Activated naive CD4-positive, alpha-beta T cell treated with anti-CD3 and anti-CD28 coated beads for 36 hours (primary cell): ENCODE measurements at regions of chr19 and their contacts with region 1.

Region 1: DNA sequence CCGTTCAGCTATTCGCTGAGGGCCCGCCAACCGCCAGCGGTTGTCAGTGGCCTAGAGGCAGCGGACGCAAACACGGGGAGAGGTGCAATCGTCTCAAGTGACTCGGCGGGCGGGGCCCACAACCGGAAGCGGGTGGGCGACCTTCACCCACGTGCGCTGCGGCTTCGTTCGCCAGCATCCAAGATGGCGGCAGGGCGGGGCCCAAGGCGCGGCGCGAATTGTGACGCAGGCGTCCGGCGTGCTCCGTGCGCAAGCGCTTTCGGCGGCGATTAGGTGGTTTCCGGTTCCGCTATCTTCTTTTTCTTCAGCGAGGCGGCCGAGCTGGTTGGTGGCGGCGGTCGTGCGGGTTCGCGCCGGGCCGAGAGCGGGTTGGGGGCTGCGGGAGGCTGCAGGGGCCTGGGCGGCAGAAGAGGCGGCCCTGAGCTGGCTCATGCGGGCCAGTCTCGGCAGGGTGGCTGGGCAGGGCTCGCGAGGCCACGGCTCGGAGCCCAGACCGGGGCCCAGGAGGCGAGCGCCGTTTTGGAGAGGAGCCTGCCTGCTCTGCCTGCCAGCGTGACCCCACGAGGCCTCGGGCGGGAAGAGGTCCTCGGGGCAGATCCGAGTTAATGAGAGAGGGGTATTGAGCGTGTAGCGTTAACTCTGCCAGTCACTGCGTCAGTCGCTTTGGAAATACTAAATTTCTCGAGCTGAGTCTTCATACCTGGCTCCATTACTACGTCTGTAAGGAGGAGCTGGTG is at the start of gene UBA52:
- DNase-seq: peak; percentile 99
- H3K4me3 Mint-ChIP-seq: peak within 1 kb of the TSS; percentile 90
- H3K27ac Mint-ChIP-seq: peak within 1 kb of the TSS; percentile 93
- H3K4me1 Mint-ChIP-seq: peaks cover 30% of the 10 kb centered on the region
- H3K27me3 Mint-ChIP-seq: no peaks in the 10 kb centered on the region
- total RNA-seq, gene UBA52: 1,997 to 2,122 TPM

Region 2: GRCh38 chr19:18478569-18479311 is 93.0 kb before region 1 on chr19:
- CTCF ChIA-PET with region 1: no interaction called
- intact Hi-C with region 1: loop called (anchors 5 kb)
- DNase-seq: peak; percentile 93
- H3K4me3 Mint-ChIP-seq: peak overlapping the region; percentile 38
- H3K27ac Mint-ChIP-seq: peak overlapping the region; percentile 87
- H3K4me1 Mint-ChIP-seq: peaks cover 65% of the 10 kb centered on the region
- H3K27me3 Mint-ChIP-seq: no peaks in the 10 kb centered on the region

Region 3: DNA sequence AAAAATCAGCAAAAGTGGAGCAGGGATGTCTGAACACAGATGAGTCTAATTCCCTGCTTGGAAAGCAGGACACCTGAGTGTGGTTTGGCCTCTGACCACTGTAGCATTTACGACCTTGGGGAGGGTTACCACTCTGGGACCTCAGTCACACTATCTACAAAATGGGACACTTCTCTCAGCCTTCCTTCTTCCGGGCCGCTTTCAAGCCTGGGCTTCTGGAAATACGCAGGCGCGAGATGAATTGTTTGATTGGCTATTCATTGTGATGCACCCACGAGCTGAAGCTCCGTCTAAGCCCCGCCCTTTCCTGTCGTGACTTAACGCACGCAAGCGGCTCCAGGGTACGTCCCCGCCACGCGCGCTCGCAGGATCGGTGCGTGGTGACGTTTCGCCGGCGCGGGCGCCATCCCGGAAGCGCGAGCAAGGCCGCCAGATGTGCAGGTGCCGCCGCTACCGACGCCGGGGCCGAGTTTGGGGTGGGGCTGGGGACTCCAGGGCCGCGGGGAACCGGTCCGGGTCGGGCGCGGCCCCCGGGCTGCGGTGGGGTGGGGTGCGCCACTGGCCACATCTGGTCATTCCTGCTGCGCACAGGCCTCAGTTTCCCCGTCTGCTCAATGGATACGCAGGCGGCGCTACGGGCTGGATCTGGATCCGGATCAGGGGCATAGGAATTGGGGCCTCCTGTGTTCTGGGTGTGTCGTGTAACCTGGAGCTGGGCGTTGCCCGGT is 14.1 kb before region 1 on chr19 and contains the start of gene KXD1:
- CTCF ChIA-PET with region 1: no interaction called
- intact Hi-C with region 1: loop called (anchors 1 kb)
- DNase-seq: peak; percentile 99
- H3K4me3 Mint-ChIP-seq: peak within 1 kb of the TSS; percentile 93
- H3K27ac Mint-ChIP-seq: peak within 1 kb of the TSS; percentile 92
- H3K4me1 Mint-ChIP-seq: peaks cover 24% of the 10 kb centered on the region
- H3K27me3 Mint-ChIP-seq: no peaks in the 10 kb centered on the region
- total RNA-seq, gene KXD1: 86.7 TPM